Activated CD8-positive, alpha-beta T cell treated with anti-CD3 and anti-CD28 coated beads, Interleukin-2, amount 10 ng/mL, durations not matched to agents 7 days and 5 days (primary cell): ENCODE measurements at regions of chr6 and their contacts with region 1.

Region 1: DNA sequence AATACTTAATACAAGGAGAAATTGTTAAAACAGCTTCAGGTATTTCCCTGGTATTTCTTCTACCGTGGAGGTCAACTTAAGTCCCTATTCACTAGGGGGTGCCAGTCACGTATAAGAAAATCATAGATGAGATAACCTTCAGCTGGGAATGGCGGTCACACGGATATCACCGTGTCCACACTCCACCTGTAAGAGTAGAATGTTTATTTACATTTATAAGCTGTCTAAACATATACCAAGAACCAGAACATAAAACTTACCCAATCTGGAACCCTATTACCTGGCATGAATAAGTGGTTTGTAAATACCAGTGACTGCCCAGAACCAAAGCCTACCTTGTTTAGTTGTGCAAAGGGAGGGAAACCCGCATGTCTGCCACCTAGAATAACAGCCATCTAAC is 1.9 kb upstream of the ELOVL4 start:
- DNase-seq: peak; percentile 83
- ATAC-seq: peak; percentile 42
- H3K4me3 Mint-ChIP-seq: no peak overlapping the region
- H3K27ac Mint-ChIP-seq: no peak overlapping the region
- H3K4me1 Mint-ChIP-seq: peaks cover 22% of the 10 kb centered on the region
- H3K27me3 Mint-ChIP-seq: peaks cover 26% of the 10 kb centered on the region

Region 2: DNA sequence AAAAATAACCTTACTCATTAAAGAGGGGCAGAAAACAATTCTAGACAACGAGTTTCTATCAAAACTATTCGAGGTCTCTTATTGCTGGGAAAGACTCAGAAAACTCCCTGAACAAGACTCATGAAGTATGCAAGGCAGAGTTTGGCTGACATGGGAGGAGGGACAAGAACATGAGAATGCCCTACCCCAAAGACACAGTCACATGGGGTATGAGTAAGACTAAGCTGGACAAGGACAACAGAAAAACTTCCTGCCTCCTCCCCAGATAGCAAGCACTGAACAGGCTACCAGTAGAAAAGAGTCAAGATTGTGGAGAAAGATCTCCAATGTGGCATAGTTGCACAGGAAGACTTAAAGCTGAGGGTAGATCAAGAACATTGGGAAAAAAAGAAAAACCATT is 831.5 kb before region 1 on chr6:
- CTCF ChIA-PET with region 1: no interaction called
- POLR2A ChIA-PET with region 1: no interaction called
- DNase-seq: no peak
- ATAC-seq: no peak
- H3K4me3 Mint-ChIP-seq: no peak overlapping the region
- H3K27ac Mint-ChIP-seq: no peak overlapping the region
- H3K4me1 Mint-ChIP-seq: peaks cover 4% of the 10 kb centered on the region
- H3K27me3 Mint-ChIP-seq: peaks cover 8% of the 10 kb centered on the region

Region 3: DNA sequence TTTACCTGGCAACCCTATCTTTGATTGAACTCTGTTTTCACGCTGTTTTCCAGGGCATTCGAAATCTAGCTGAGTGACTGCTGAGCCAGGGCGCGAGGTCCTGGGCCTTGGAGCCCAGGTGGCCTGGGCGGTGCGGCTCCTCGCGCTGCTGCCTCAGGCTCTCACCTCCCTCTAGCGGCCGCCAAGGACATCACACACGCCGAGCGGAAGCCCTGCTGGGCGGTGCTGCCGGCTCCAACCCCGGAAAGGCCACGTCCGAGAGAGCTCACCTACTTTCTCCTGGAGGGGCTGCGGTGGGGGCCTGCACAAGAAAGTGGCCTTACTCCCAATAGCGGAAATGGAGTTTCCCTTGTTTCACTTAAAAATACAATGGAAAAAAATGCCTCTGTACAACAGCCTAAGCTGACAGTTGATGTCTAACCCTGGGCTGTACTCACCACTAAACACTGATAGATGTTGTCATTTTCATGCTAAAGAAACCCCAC is 79.6 kb before region 1 on chr6:
- CTCF ChIA-PET with region 1: interaction called, 15 read pairs
- POLR2A ChIA-PET with region 1: no interaction called
- DNase-seq: peak; percentile 87
- ATAC-seq: peak; percentile 100
- H3K4me3 Mint-ChIP-seq: peak overlapping the region; percentile 30
- H3K27ac Mint-ChIP-seq: peak overlapping the region; percentile 62
- H3K4me1 Mint-ChIP-seq: peaks cover 11% of the 10 kb centered on the region
- H3K27me3 Mint-ChIP-seq: peaks cover 16% of the 10 kb centered on the region

Region 4: DNA sequence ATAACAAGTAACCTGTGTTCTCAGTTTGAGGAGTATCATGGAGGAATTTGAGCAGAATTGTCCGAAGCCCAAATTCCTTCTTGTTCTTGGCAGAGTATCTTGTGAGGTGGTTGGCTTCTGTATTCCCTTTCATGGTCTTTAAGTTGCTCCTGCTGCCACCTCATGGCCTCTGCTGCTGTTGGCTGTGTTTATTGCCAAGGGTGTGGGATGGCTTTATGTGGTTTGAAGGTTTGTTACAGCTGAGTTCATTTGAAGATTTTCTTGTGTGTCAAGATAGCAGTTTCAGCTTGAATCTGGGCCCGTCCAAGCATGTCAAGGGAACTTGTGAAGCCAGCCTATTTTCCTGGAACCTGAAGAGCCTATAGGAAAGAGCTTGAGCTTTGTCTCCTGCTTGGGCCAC is 35.0 kb after region 1 on chr6:
- CTCF ChIA-PET with region 1: interaction called, 24 read pairs
- POLR2A ChIA-PET with region 1: no interaction called
- DNase-seq: no peak
- ATAC-seq: no peak
- H3K4me3 Mint-ChIP-seq: no peak overlapping the region
- H3K27ac Mint-ChIP-seq: no peak overlapping the region
- H3K4me1 Mint-ChIP-seq: peaks cover 4% of the 10 kb centered on the region
- H3K27me3 Mint-ChIP-seq: peaks cover 3% of the 10 kb centered on the region

Region 5: DNA sequence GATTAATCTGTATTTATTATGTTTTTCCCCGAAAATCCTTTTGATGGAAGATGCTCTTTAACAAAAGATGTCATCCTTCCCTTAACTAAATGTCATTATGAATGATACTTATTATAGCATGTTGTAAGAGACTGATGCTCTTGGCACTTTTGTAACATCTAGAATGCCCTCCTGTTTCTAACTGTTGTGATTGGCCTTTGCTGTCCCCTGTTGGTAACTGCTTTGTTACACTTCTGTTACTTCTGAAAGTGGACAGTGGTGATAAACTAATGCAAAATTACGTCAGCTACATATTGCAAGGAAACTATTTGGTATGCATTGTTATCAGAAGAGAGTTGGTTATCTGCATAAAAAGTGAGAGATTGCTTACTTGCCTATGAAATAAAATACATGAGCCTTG is 61.1 kb after region 1 on chr6:
- CTCF ChIA-PET with region 1: interaction called, 108 read pairs
- POLR2A ChIA-PET with region 1: no interaction called
- DNase-seq: no peak
- ATAC-seq: no peak
- H3K4me3 Mint-ChIP-seq: no peak overlapping the region
- H3K27ac Mint-ChIP-seq: no peak overlapping the region
- H3K4me1 Mint-ChIP-seq: peaks cover 37% of the 10 kb centered on the region
- H3K27me3 Mint-ChIP-seq: no peaks in the 10 kb centered on the region

Region 6: GRCh38 chr6:80094017-80094416 is 144.8 kb after region 1 on chr6:
- CTCF ChIA-PET with region 1: interaction called, 81 read pairs
- POLR2A ChIA-PET with region 1: no interaction called
- DNase-seq: peak; percentile 34
- ATAC-seq: no peak
- H3K4me3 Mint-ChIP-seq: no peak overlapping the region
- H3K27ac Mint-ChIP-seq: no peak overlapping the region
- H3K4me1 Mint-ChIP-seq: peaks cover 10% of the 10 kb centered on the region
- H3K27me3 Mint-ChIP-seq: peaks cover 15% of the 10 kb centered on the region